ENCODE measurements at regions of chr10 and their contacts with region 1.

Region 1: GRCh38 chr10:101161494-101162299 is 30.6 kb downstream of the TLX1 start:
- DNase-seq: peak; percentile 83
- ATAC-seq: peak; percentile 96
- H3K4me3 Mint-ChIP-seq: peak overlapping the region; percentile 55
- H3K27ac Mint-ChIP-seq: no peak overlapping the region; the same call in 1 of the 2 replicates
- H3K4me1 Mint-ChIP-seq: peaks cover 37% of the 10 kb centered on the region
- H3K27me3 Mint-ChIP-seq: peaks cover 52% of the 10 kb centered on the region
- CTCF ChIP-seq: peak; percentile 97

Region 2: DNA sequence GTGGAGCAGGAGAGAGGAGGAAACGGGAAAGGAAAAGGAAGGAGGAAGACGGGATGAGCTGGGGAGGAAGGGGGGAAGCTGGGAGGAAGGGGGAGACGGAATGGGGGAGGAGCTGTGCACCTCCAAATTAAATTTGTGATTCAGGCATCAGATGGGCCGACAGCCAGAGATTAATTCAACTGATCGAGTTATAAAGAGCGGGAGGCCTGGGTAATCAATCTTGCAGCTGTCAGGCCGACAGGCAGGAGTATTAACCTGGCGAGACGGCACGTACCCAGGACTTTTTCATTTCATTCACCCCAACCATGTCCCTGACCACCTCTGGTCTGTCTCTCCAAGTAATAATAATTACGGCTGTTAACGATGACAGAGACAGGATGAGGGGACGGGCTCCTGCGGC is 73.7 kb before region 1 on chr10:
- CTCF ChIA-PET with region 1: no interaction called
- POLR2A ChIA-PET with region 1: no interaction called
- DNase-seq: no peak
- ATAC-seq: no peak
- H3K4me3 Mint-ChIP-seq: no peak overlapping the region
- H3K27ac Mint-ChIP-seq: no peak overlapping the region
- H3K4me1 Mint-ChIP-seq: peaks cover 4% of the 10 kb centered on the region; the same call in 1 of the 2 replicates
- H3K27me3 Mint-ChIP-seq: peaks cover 28% of the 10 kb centered on the region
- CTCF ChIP-seq: no peak

Region 3: DNA sequence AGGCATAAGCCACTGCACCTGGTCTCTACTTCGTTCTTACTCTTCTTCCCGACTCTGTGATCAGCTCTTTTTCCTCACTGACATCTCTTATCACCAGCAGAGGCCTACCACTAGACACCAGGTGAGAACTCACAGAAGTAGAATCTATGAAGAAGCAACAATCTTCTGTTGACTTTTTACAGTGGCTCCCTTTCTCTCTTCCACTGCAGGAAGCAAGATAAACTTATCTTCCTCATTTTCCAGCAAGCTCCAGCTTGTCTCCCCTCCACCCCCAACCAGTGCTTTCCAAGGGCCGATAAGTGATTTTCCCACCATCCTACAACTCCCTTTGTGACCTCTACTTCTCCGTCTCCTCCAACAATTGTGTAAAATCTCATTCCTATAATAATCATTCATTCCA is 14.9 kb after region 1 on chr10:
- CTCF ChIA-PET with region 1: interaction called, 12 read pairs
- POLR2A ChIA-PET with region 1: no interaction called
- DNase-seq: no peak
- ATAC-seq: no peak
- H3K4me3 Mint-ChIP-seq: no peak overlapping the region
- H3K27ac Mint-ChIP-seq: no peak overlapping the region
- H3K4me1 Mint-ChIP-seq: no peaks in the 10 kb centered on the region
- H3K27me3 Mint-ChIP-seq: peaks cover 4% of the 10 kb centered on the region
- CTCF ChIP-seq: no peak

Region 4: DNA sequence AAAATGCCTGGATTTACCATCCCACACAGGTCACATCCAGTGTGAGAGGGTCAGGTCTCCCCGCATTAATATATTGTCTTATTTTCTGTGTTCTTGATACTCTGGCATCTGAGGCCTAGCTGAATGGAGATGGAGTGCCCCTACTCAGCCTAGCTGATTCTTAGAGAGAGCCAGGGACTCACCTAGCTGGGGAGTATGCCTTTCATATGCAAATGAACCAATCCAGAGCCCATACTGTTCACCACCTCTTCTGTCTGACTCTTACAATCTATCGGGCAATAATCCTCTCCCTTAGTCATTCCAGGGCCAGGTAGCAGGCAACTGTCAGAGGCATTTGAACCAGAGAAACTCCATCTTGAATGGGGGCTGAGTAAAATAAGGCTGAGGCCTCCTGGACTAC is 21.2 kb after region 1 on chr10:
- CTCF ChIA-PET with region 1: interaction called, 11 read pairs
- POLR2A ChIA-PET with region 1: no interaction called
- DNase-seq: no peak
- ATAC-seq: peak; percentile 100
- H3K4me3 Mint-ChIP-seq: no peak overlapping the region
- H3K27ac Mint-ChIP-seq: no peak overlapping the region
- H3K4me1 Mint-ChIP-seq: peaks cover 21% of the 10 kb centered on the region
- H3K27me3 Mint-ChIP-seq: no peaks in the 10 kb centered on the region; the same call in none of the 2 replicates
- CTCF ChIP-seq: no peak

Region 5: GRCh38 chr10:101525848-101526247 is 364.2 kb after region 1 on chr10:
- CTCF ChIA-PET with region 1: no interaction called
- POLR2A ChIA-PET with region 1: no interaction called
- DNase-seq: no peak
- ATAC-seq: no peak
- H3K4me3 Mint-ChIP-seq: no peak overlapping the region
- H3K27ac Mint-ChIP-seq: peak overlapping the region; percentile 34; the same call in 1 of the 2 replicates
- H3K4me1 Mint-ChIP-seq: peaks cover 21% of the 10 kb centered on the region
- H3K27me3 Mint-ChIP-seq: no peaks in the 10 kb centered on the region
- CTCF ChIP-seq: no peak